GM12878 (cell line): ENCODE measurements at regions of chr1 and their contacts with region 1.

Region 1: GRCh38 chr1:21963477-21964217 is 13.2 kb upstream of the CELA3B start:
- DNase-seq: peak; percentile 26
- ATAC-seq: peak; percentile 98
- H3K4me3 ChIP-seq: no peak overlapping the region
- H3K27ac ChIP-seq: no peak overlapping the region
- H3K4me1 ChIP-seq: no peaks in the 10 kb centered on the region
- H3K27me3 ChIP-seq: no peaks in the 10 kb centered on the region
- CTCF ChIP-seq: peak; percentile 84 to 89 (median 87)
- EP300 ChIP-seq: no peak
- POLR2A ChIP-seq: no peak
- RAD21 ChIP-seq: peak; percentile 93

Region 2: GRCh38 chr1:21659099-21659923 is 304.3 kb before region 1 on chr1:
- CTCF ChIA-PET with region 1: interaction called, 3 read pairs
- POLR2A ChIA-PET with region 1: no interaction called
- RAD21 ChIA-PET with region 1: no interaction called
- SMC1A ChIA-PET with region 1: no interaction called
- in situ Hi-C with region 1: no loop called
- intact Hi-C with region 1: loop called (anchors 1 kb)
- DNase-seq: no peak
- ATAC-seq: peak; percentile 92
- H3K4me3 ChIP-seq: no peak overlapping the region
- H3K27ac ChIP-seq: no peak overlapping the region
- H3K4me1 ChIP-seq: no peaks in the 10 kb centered on the region
- H3K27me3 ChIP-seq: peaks cover 0 to 2% of the 10 kb centered on the region in 2 experiments; a peak in 1 of 4 replicates
- CTCF ChIP-seq: peak; percentile 75 to 96 (median 87)
- EP300 ChIP-seq: no peak; a peak in 1 of 4 replicates
- POLR2A ChIP-seq: no peak
- RAD21 ChIP-seq: peak; percentile 79

Region 3: GRCh38 chr1:21811875-21812305 is 151.8 kb before region 1 on chr1 and contains the start of gene LDLRAD2:
- CTCF ChIA-PET with region 1: no interaction called
- POLR2A ChIA-PET with region 1: no interaction called
- RAD21 ChIA-PET with region 1: no interaction called
- SMC1A ChIA-PET with region 1: no interaction called
- in situ Hi-C with region 1: no loop called
- intact Hi-C with region 1: no loop called
- DNase-seq: no peak
- ATAC-seq: no peak
- H3K4me3 ChIP-seq: no peak within 1 kb of the TSS
- H3K27ac ChIP-seq: no peak within 1 kb of the TSS
- H3K4me1 ChIP-seq: no peaks in the 10 kb centered on the region
- H3K27me3 ChIP-seq: no peaks in the 10 kb centered on the region; a peak in 1 of 4 replicates
- CTCF ChIP-seq: no peak
- EP300 ChIP-seq: no peak
- POLR2A ChIP-seq: no peak
- RAD21 ChIP-seq: no peak
- polyA plus RNA-seq, gene LDLRAD2: 0.11 TPM in 1 of 2 experiments, not detected in the other